ENCODE measurements at regions of chr3 and their contacts with region 1.

Region 1: GRCh38 chr3:133464573-133464972 is 64.7 kb downstream of the BFSP2 start:
- DNase-seq: peak; percentile 77
- H3K4me3 ChIP-seq: no peak overlapping the region
- H3K27ac ChIP-seq: peak overlapping the region; percentile 96
- H3K4me1 ChIP-seq: peaks cover 94% of the 10 kb centered on the region
- CTCF ChIP-seq: peak; percentile 82

Region 2: DNA sequence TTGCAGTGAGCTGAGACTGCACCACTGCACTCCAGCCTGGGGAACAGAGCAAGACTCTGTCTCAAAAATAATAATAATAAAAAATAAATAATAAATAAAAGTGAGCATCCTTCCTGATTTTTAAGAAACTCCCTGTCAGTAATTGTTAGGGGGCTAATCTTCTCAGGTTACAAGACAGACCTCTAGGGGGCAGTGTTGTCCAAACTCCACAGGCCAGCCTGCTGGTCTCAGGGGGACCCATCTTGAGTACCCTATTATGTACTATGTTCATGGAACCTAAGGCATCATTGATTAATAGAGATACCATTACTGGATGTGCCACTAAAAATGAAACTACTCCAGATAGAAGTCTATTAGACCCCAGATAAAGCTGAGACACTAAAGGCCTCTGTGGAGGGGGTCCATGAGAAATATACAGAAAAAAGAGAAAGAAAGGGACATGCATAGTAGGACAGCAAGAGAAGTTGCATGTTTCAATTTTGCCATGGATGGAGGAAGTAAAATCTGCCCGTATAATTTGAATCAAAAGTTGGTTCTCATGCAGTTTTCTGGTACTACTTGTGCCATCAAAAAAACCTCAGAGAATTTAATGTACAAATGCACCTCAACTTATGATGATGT is 23.5 kb after region 1 on chr3:
- CTCF ChIA-PET with region 1: interaction called, 7 read pairs
- POLR2A ChIA-PET with region 1: interaction called, 90 read pairs
- intact Hi-C with region 1: loop called (anchors 1 kb)
- DNase-seq: no peak
- H3K4me3 ChIP-seq: peak overlapping the region; percentile 61
- H3K27ac ChIP-seq: peak overlapping the region; percentile 92
- H3K4me1 ChIP-seq: peaks cover 49% of the 10 kb centered on the region
- CTCF ChIP-seq: peak; percentile 74

Region 3: GRCh38 chr3:133506215-133506901 is 41.8 kb after region 1 on chr3:
- CTCF ChIA-PET with region 1: no interaction called
- POLR2A ChIA-PET with region 1: no interaction called
- intact Hi-C with region 1: no loop called
- DNase-seq: peak; percentile 77
- H3K4me3 ChIP-seq: peak overlapping the region; percentile 33
- H3K27ac ChIP-seq: peak overlapping the region; percentile 32
- H3K4me1 ChIP-seq: peaks cover 24% of the 10 kb centered on the region
- CTCF ChIP-seq: no peak

Region 4: DNA sequence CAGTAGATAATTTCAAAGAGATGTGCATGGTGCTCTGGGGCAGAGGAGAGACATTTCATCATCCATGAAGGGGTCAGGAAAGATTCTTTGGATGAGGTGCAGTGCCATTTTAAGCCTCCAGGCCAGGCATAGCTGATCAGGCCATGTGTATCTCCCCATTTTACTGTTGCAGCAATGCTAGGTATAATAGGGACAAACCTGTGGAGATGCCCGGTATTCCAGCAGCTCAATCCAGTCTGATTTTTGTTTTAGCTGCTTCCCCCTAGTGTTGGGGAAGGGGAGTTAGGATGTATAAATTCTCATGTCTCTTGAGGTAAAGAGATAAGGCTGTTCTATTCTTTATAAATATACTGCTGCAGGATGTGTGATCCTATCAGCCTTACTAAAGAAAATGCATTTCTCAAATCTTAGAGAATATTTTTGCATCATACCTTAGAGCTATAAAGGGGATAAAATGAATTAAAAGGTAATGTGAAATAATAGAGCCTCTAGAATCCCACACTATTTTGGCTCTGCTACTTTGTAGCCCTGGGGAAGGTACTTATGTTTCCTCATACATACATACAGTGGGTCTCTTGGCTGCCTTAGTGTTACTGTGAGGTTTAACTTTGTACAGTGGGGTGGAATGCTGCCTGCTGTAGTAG is 114.1 kb after region 1 on chr3:
- CTCF ChIA-PET with region 1: interaction called, 7 read pairs
- POLR2A ChIA-PET with region 1: interaction called, 73 read pairs
- intact Hi-C with region 1: loop called (anchors 1 kb)
- DNase-seq: peak; percentile 23
- H3K4me3 ChIP-seq: peak overlapping the region; percentile 87
- H3K27ac ChIP-seq: peak overlapping the region; percentile 31
- H3K4me1 ChIP-seq: peaks cover 60% of the 10 kb centered on the region
- CTCF ChIP-seq: peak; percentile 88

Region 5: GRCh38 chr3:133661454-133662277 is 197.1 kb after region 1 on chr3 and contains the start of gene TOPBP1:
- CTCF ChIA-PET with region 1: no interaction called
- POLR2A ChIA-PET with region 1: no interaction called
- intact Hi-C with region 1: loop called (anchors 5 kb)
- DNase-seq: peak; percentile 92
- H3K4me3 ChIP-seq: peak within 1 kb of the TSS; percentile 99
- H3K27ac ChIP-seq: peak within 1 kb of the TSS; percentile 76
- H3K4me1 ChIP-seq: peaks cover 39% of the 10 kb centered on the region
- CTCF ChIP-seq: no peak
- total RNA-seq, gene TOPBP1: 139 and 167 TPM in 2 replicates

Measured in OCI-LY7 (cell line).